Activated T-helper 1 cell treated with anti-CD3 and anti-CD28 coated beads, Interleukin-12 subunit alpha, Interleukin-12 subunit beta, Interleukin-2, Interleukin-4 antibody, amounts not matched to agents 30 ng/mL and 10 ng/mL and 1 ng/mL, durations not matched to agents 14 hours and 24 hours and 36 hours (primary cell): ENCODE measurements at regions of chr6 and their contacts with region 1.

Region 1: DNA sequence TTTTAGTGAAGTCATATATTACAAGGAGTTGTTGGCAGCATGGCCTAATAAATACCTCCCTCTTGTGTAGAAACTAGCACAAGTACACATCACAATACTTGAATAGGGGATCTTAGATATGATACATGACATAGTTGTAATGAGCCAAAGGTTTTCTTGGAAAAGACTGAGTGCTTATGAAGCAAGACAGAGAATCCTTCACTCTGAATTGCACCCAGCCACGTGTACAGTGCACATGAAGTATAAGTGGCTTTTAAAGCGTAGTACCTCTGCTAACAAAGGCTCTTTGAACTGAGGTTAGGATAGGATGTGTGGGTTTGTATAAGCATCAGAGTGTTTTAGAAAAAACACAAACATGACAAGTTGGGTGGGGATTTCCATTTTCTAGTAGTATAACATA is 145.5 kb upstream of the STMND1 start:
- DNase-seq: no peak
- H3K4me3 Mint-ChIP-seq: no peak overlapping the region
- H3K27ac Mint-ChIP-seq: peak overlapping the region; percentile 59
- H3K4me1 Mint-ChIP-seq: peaks cover 14% of the 10 kb centered on the region
- H3K27me3 Mint-ChIP-seq: peaks cover 3% of the 10 kb centered on the region

Region 2: DNA sequence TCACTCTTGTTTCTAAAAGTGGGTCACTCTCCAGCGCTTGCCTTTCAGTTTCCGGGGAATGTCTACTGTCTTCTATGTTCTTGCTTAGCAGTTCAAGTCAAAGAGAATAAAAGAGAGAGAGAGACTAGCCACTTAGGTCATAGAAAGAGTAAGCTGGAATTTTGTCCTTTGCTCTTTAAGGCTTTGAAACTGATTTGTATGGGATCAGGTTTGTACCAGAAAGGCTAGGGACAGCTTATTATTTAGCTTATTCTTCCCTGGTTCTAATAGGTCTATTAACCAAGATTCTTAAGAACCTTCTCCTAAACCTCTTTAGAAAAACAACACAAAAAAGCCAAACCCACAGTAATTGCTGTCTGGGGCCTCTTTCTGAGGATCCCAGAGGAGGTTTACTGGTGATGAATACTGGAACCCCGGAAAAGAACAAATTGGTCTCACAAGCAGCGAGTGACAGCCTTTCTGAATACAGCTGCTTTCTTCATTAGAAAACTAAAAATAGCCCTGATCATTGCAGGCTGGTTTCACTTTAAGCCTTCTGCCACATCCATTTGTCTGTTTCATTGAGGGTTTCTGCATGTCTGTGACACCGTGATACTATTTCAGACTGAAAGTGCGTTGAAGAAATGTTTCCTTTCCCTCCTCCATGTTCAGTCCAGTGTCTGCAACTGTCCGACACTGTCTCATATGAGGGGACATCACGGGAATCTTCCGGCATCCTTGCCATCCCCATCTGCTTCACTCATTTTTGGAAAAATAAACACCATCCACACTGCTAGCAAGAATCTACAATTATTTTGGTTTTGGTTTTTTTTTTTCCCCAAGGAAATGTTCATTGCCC is 120.0 kb before region 1 on chr6:
- intact Hi-C with region 1: loop called (anchors 1 kb)
- DNase-seq: no peak
- H3K4me3 Mint-ChIP-seq: peak overlapping the region; percentile 59
- H3K27ac Mint-ChIP-seq: peak overlapping the region; percentile 73
- H3K4me1 Mint-ChIP-seq: peaks cover 25% of the 10 kb centered on the region
- H3K27me3 Mint-ChIP-seq: peaks cover 8% of the 10 kb centered on the region